ENCODE measurements at regions of chr7 and their contacts with region 1.

Region 1: DNA sequence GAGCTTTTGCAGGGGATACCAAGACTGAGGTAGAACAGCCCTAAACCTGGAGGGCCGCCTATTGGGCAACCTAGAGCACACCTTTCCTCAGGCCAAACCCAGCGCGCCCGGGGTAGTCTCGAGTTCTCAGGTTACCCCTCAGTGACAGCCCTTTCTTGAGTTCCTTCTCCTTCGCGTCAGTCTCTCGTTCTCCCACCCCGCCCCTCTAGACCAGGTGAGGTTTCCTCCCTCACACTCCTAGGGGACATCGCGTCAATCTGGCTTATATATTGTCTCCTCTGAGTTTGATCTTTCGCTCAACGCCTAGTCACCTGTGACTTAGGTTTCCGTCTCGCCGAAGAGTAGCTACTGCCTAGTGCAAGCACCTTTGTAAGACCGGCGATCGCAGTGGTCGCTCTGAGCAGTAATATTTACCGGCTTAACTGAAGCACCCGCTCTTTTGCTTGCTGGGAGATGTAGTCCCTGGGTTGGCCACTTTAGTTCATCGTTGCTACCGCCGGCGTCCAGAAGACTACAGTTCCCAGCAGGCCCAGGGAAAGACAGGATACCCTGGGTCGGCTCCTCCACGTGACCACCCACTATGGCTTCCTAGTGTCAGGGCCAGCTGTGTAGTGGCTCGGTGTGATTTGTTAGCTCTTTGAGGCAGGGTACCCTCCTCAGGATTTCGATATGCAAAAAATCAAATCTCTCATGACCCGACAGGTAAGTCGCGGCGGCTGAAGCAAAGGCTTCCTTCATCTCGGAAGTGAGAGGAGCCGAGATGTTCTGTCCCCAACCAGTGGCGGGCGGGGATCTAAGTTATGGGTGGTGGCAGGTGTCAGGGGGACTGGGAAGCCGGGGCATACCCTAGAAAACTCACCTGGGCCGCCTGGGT is at the start of gene VPS50:
- DNase-seq: peak; percentile 95
- H3K4me3 ChIP-seq: peak within 1 kb of the TSS; percentile 61 to 83 (median 68)
- H3K27ac ChIP-seq: peak within 1 kb of the TSS; percentile 79 to 86 (median 83)
- H3K4me1 ChIP-seq: peaks cover 0 to 34% (median 13%) of the 10 kb centered on the region in 4 donors
- H3K27me3 ChIP-seq: no peaks in the 10 kb centered on the region
- CTCF ChIP-seq: peak in 3 of 5 experiments; percentile 18 to 59 (median 47)
- EP300 ChIP-seq: no peak
- POLR2A ChIP-seq: peak; percentile 62
- total RNA-seq, gene VPS50: 17.1 to 43.7 (median 26.9) TPM

Region 2: GRCh38 chr7:93298671-93299070 is 66.6 kb after region 1 on chr7:
- in situ Hi-C with region 1: loop called in 1 of 4 experiments (anchors 10 kb)
- intact Hi-C with region 1: no loop called
- DNase-seq: no peak
- H3K4me3 ChIP-seq: no peak overlapping the region
- H3K27ac ChIP-seq: no peak overlapping the region
- H3K4me1 ChIP-seq: no peaks in the 10 kb centered on the region
- H3K27me3 ChIP-seq: no peaks in the 10 kb centered on the region
- CTCF ChIP-seq: no peak
- EP300 ChIP-seq: no peak
- POLR2A ChIP-seq: no peak